ENCODE measurements at regions of chr6 and their contacts with region 1.

Region 1: DNA sequence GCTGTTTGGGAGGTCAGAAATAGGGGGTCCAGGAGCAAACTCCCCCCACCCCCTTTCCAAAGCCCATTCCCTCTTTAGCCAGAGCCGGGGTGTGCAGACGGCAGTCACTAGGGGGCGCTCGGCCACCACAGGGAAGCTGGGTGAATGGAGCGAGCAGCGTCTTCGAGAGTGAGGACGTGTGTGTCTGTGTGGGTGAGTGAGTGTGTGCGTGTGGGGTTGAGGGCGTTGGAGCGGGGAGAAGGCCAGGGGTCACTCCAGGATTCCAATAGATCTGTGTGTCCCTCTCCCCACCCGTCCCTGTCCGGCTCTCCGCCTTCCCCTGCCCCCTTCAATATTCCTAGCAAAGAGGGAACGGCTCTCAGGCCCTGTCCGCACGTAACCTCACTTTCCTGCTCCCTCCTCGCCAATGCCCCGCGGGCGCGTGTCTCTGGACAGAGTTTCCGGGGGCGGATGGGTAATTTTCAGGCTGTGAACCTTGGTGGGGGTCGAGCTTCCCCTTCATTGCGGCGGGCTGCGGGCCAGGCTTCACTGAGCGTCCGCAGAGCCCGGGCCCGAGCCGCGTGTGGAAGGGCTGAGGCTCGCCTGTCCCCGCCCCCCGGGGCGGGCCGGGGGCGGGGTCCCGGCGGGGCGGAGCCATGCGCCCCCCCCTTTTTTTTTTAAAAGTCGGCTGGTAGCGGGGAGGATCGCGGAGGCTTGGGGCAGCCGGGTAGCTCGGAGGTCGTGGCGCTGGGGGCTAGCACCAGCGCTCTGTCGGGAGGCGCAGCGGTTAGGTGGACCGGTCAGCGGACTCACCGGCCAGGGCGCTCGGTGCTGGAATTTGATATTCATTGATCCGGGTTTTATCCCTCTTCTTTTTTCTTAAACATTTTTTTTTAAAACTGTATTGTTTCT is at the start of gene VEGFA:
- DNase-seq: peak; percentile 92
- ATAC-seq: peak; percentile 73
- H3K4me3 Mint-ChIP-seq: peak within 1 kb of the TSS; percentile 97
- H3K27ac Mint-ChIP-seq: peak within 1 kb of the TSS; percentile 85
- H3K4me1 Mint-ChIP-seq: peaks cover 38% of the 10 kb centered on the region
- H3K27me3 Mint-ChIP-seq: peaks cover 9% of the 10 kb centered on the region
- total RNA-seq, gene VEGFA: 37.9 to 39.3 TPM

Region 2: DNA sequence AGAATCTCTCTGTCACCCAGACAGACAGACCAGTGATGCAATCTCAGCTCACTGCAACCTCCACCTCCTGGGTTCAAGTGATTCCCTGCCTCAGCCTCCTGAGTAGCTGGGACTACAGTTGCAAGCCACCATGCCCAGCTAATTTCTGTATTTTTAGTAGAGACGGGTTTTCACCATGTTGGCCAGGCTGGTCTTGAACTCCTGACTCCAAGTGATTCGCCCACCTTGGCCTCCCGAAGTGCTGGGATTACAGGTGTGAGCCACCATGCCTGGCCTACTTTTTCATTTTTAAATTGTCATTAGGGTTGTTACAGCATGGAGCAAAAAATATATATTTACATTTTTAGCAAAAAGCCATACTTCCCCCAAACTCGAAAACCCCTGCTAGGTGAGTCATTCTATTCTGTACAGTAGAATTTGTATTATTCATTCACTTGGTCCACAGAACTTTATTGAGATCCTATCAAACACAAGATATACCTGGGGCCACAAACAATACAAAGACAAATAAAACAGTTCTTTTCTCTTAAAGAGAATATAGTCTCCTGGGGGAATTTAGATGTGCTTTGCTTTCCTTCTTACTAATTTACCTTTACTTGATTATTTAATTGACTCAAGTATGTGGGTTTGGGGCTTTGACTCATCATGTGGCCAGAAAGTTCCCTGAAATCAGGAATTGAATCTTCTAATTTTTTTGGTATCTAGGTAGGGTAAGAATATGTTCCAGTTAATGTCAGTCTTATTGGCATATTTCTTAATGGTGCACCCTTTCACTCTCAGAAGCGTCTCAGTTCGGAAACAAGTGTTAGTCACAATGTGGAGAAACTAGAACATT is 1811.5 kb before region 1 on chr6:
- CTCF ChIA-PET with region 1: no interaction called
- POLR2A ChIA-PET with region 1: no interaction called
- DNase-seq: no peak
- ATAC-seq: peak; percentile 49
- H3K4me3 Mint-ChIP-seq: peak overlapping the region; percentile 30
- H3K27ac Mint-ChIP-seq: peak overlapping the region; percentile 77
- H3K4me1 Mint-ChIP-seq: peaks cover 62% of the 10 kb centered on the region
- H3K27me3 Mint-ChIP-seq: no peaks in the 10 kb centered on the region

Region 3: GRCh38 chr6:43444036-43444435 is 325.7 kb before region 1 on chr6:
- CTCF ChIA-PET with region 1: no interaction called
- POLR2A ChIA-PET with region 1: no interaction called
- DNase-seq: no peak
- ATAC-seq: no peak
- H3K4me3 Mint-ChIP-seq: no peak overlapping the region
- H3K27ac Mint-ChIP-seq: no peak overlapping the region
- H3K4me1 Mint-ChIP-seq: no peaks in the 10 kb centered on the region
- H3K27me3 Mint-ChIP-seq: no peaks in the 10 kb centered on the region

Region 4: GRCh38 chr6:43723737-43724295 is 46.0 kb before region 1 on chr6:
- CTCF ChIA-PET with region 1: interaction called, 27 read pairs
- POLR2A ChIA-PET with region 1: interaction called, 3 read pairs
- DNase-seq: peak; percentile 83
- ATAC-seq: peak; percentile 83
- H3K4me3 Mint-ChIP-seq: no peak overlapping the region
- H3K27ac Mint-ChIP-seq: no peak overlapping the region
- H3K4me1 Mint-ChIP-seq: peaks cover 30% of the 10 kb centered on the region
- H3K27me3 Mint-ChIP-seq: peaks cover 18% of the 10 kb centered on the region

Region 5: DNA sequence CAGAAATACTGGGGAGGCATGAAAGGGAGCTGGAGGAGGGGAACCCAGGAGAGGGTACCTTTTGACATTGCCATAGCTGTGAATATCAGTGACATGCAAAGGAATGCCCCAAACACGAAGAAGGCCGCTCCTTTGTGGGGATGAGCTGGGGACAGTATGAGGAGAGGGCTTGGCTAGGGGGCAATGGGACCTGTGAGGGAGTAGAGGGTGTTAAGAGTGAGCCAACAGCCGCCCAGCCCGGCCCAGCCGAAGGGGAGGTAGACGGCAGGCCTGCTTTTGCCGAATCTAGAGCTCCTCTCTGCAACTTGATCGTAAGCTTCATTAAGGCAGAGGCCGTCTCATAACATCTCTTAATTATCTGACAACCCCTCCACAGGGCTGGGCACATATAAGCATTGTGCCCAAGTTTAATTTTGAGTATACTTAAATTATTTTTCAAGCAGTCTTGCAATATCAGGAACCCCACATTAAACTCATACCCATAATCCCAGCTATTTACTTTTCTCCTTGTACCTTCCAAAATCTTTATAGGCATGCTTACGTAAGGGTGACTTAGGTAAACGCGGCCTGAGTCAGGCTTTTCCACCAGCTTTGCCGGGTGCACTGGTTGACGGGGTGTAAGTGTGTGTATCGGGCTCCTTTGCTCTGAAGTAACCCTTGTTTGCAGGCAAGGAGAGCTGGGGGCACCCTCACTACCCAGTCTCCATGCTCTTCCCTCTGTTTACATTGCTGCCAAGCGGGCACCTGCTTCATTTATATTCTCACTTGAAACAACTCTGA is 24.6 kb before region 1 on chr6:
- CTCF ChIA-PET with region 1: interaction called, 14 read pairs
- POLR2A ChIA-PET with region 1: no interaction called
- DNase-seq: no peak
- ATAC-seq: no peak
- H3K4me3 Mint-ChIP-seq: no peak overlapping the region
- H3K27ac Mint-ChIP-seq: peak overlapping the region; percentile 4
- H3K4me1 Mint-ChIP-seq: no peaks in the 10 kb centered on the region
- H3K27me3 Mint-ChIP-seq: peaks cover 19% of the 10 kb centered on the region

Region 6: DNA sequence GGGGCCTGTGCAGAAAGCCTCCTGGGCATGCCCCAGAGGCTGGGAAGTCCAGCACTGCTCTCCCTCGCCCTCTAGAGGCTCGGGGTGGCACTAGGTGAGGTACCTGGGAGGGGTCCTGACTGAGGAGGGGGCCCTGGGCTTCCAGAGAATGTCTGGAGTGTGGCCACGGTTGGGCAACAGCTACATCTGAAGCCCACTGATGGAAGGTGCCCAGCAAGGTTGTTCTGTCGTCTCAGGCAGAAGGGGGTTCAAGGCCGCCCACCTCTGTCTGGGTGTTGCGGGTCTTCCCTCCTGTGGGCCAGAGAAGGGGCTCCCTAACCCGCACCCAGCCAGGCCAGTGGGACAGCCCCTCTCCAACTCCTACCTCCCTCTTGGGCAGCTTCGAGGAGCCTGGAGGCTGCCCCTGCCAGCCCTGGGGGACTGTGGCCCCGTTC is 11.1 kb before region 1 on chr6:
- CTCF ChIA-PET with region 1: interaction called, 22 read pairs
- POLR2A ChIA-PET with region 1: no interaction called
- DNase-seq: no peak
- ATAC-seq: peak; percentile 54
- H3K4me3 Mint-ChIP-seq: no peak overlapping the region
- H3K27ac Mint-ChIP-seq: no peak overlapping the region
- H3K4me1 Mint-ChIP-seq: no peaks in the 10 kb centered on the region
- H3K27me3 Mint-ChIP-seq: peaks cover 22% of the 10 kb centered on the region

Region 7: DNA sequence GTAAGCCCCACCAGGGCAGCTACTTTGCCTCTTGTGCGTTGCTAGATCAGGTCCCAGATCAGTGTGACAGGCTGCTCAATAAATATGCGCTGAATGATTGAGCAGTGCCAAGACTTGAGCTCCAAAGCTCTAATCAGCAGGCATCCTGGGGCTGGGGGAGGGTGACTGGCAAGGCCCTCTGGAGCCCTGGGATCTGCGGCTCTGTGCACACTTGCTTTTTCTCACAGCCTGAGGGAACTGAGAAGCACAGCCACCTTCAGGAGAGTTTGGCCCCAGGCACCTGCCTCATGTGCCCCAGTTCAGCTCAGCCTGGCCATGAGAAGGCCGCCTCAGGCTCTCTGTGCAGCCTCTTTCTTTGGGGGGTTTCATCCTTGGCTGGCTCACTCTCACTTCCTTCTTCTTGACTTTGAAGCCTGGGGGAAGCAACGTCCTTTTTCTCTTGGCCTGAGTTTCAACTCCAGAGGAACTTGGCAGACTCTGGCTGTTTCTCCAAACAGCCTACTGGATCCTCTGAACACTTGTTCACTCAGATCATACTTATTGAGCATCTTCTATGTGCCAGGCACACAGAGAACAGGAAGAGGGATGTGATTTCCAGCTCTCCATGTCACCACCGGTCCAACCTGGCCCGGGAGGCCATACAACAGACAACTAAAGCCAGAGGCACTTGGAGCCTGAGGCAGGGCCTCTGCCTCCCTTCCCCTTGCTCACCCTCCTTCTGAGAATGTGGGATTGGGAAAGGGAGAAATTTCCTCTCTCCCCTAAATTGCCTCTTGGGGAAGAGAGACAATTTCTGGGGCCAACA is 114.3 kb after region 1 on chr6:
- CTCF ChIA-PET with region 1: no interaction called
- POLR2A ChIA-PET with region 1: no interaction called
- DNase-seq: no peak
- ATAC-seq: no peak
- H3K4me3 Mint-ChIP-seq: no peak overlapping the region
- H3K27ac Mint-ChIP-seq: no peak overlapping the region
- H3K4me1 Mint-ChIP-seq: no peaks in the 10 kb centered on the region
- H3K27me3 Mint-ChIP-seq: peaks cover under 1% of the 10 kb centered on the region